CD14-positive monocyte (primary cell): ENCODE measurements at regions of chr17 and their contacts with region 1.

Region 1: GRCh38 chr17:74601944-74602572 is 10.0 kb upstream of the CD300LD start:
- DNase-seq: peak; percentile 58 to 67 (median 65)
- H3K4me3 ChIP-seq: peak overlapping the region in 2 of 3 experiments; percentile 10 to 60
- H3K4me3 Mint-ChIP-seq: peak overlapping the region; percentile 25 to 87
- H3K27ac ChIP-seq: peak overlapping the region; percentile 43 to 74
- H3K27ac Mint-ChIP-seq: peak overlapping the region; percentile 75 to 95 (median 87)
- H3K4me1 ChIP-seq: peaks cover 98 to 100% of the 10 kb centered on the region in 2 donors
- H3K4me1 Mint-ChIP-seq: peaks cover 98% of the 10 kb centered on the region
- H3K27me3 ChIP-seq: no peaks in the 10 kb centered on the region
- H3K27me3 Mint-ChIP-seq: peaks cover 0 to 15% (median 0%) of the 10 kb centered on the region in 3 donors
- CTCF ChIP-seq: peak; percentile 92

Region 2: GRCh38 chr17:74539291-74539820 is 62.7 kb before region 1 on chr17:
- intact Hi-C with region 1: loop called in 1 of 2 experiments (anchors 5 kb)
- DNase-seq: no peak
- H3K4me3 ChIP-seq: no peak overlapping the region
- H3K4me3 Mint-ChIP-seq: no peak overlapping the region
- H3K27ac ChIP-seq: no peak overlapping the region
- H3K27ac Mint-ChIP-seq: peak overlapping the region in 2 of 7 donors; percentile 10 to 51
- H3K4me1 ChIP-seq: peaks cover 11 to 18% of the 10 kb centered on the region in 2 donors
- H3K4me1 Mint-ChIP-seq: peaks cover 26% of the 10 kb centered on the region
- H3K27me3 ChIP-seq: no peaks in the 10 kb centered on the region
- H3K27me3 Mint-ChIP-seq: no peaks in the 10 kb centered on the region
- CTCF ChIP-seq: no peak

Region 3: DNA sequence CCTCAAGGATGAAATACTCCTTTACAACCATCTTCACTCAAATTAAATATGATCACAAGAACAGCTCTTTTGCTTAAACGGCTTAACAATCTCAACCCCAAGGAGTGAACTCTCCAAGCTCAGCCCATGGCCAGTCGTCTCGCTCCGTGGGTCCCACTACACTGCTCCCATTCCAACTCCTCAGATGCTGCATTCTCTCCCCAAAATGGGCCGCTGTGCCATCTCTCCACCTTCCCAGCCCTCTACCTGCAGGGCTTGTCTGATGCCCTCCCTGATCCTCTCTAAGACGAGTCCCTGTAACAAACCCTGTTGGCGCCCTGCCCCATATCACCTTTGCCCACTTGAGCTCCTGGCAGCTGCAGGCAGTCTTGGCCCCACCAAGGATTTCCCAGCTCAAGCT is 40.9 kb before region 1 on chr17:
- intact Hi-C with region 1: loop called in 1 of 2 experiments (anchors 5 kb)
- DNase-seq: no peak
- H3K4me3 ChIP-seq: no peak overlapping the region
- H3K4me3 Mint-ChIP-seq: no peak overlapping the region
- H3K27ac ChIP-seq: no peak overlapping the region
- H3K27ac Mint-ChIP-seq: peak overlapping the region in 2 of 7 donors; percentile 70 to 77
- H3K4me1 ChIP-seq: peaks cover 56 to 79% of the 10 kb centered on the region in 2 donors
- H3K4me1 Mint-ChIP-seq: peaks cover 23% of the 10 kb centered on the region
- H3K27me3 ChIP-seq: no peaks in the 10 kb centered on the region
- H3K27me3 Mint-ChIP-seq: peaks cover 3 to 8% (median 6%) of the 10 kb centered on the region in 3 donors
- CTCF ChIP-seq: no peak

Region 4: DNA sequence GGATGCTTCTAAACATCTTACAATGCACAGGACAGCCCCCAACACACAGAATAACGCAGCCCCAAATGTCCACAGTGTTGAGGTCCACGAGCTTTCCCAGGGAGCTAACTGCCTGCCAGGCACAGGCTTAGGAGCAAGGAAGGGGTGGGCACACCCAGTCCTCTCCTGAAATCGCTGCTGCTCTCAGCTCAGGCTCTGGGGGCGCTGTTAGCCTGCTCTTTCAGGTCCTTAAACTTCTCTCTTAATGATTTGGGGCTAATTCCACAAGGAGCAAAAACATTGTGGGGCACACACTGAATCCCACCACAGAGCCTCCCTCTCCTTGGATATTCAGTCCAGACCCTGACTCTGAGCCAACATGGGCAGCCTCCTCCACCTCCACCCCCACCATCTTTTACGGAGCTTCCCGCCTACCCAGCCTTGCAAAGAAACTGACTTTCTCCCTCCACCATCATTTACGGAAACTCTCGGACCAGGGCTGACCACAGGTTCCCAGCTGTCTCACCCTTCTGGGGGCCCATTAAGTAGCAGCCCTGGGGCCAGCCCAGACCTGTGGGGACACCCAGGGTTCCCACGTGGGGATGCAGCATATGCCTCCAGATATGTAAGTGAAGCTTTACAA is 35.8 kb before region 1 on chr17:
- intact Hi-C with region 1: loop called (anchors 1 to 5 kb)
- DNase-seq: peak in 2 of 3 donors; percentile 58 to 59
- H3K4me3 ChIP-seq: peak overlapping the region in 2 of 3 experiments; percentile 37 to 79
- H3K4me3 Mint-ChIP-seq: peak overlapping the region; percentile 73 to 91
- H3K27ac ChIP-seq: peak overlapping the region; percentile 26 to 82
- H3K27ac Mint-ChIP-seq: peak overlapping the region; percentile 14 to 95 (median 86)
- H3K4me1 ChIP-seq: peaks cover 75 to 87% of the 10 kb centered on the region in 2 donors
- H3K4me1 Mint-ChIP-seq: peaks cover 64% of the 10 kb centered on the region
- H3K27me3 ChIP-seq: no peaks in the 10 kb centered on the region
- H3K27me3 Mint-ChIP-seq: peaks cover 3 to 9% (median 4%) of the 10 kb centered on the region in 3 donors
- CTCF ChIP-seq: peak; percentile 82

Region 5: DNA sequence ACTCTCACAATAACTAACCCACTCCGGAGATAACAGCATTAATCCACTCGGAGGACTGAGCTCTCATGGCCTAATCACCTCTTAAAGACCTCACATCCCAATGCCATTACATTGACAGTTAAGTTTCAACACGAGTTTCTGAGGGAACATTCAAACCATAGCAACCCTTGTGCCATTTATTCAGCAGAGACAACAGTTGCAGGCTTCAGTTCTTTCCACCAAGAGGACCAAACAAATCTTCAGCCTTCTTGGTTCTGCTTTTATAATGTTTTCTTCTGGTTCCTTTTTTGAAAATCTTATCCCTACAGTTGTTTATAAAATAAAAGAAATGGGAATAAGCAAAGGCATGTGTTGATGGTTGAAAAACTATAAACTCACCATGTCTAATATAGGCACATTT is 23.6 kb after region 1 on chr17:
- intact Hi-C with region 1: no loop called
- DNase-seq: no peak
- H3K4me3 ChIP-seq: peak overlapping the region in 1 of 3 experiments; percentile 23
- H3K4me3 Mint-ChIP-seq: peak overlapping the region in 1 of 2 donors; percentile 28
- H3K27ac ChIP-seq: peak overlapping the region; percentile 32 to 70
- H3K27ac Mint-ChIP-seq: peak overlapping the region; percentile 76 to 91 (median 86)
- H3K4me1 ChIP-seq: peaks cover 71 to 85% of the 10 kb centered on the region in 2 donors
- H3K4me1 Mint-ChIP-seq: peaks cover 84% of the 10 kb centered on the region
- H3K27me3 ChIP-seq: no peaks in the 10 kb centered on the region
- H3K27me3 Mint-ChIP-seq: peaks cover 0 to 3% (median 1%) of the 10 kb centered on the region in 3 donors
- CTCF ChIP-seq: no peak

Region 6: GRCh38 chr17:74639704-74640151 is 37.7 kb after region 1 on chr17:
- intact Hi-C with region 1: loop called in 1 of 2 experiments (anchors 2 kb)
- DNase-seq: peak; percentile 89 to 94 (median 90)
- H3K4me3 ChIP-seq: peak overlapping the region in 1 of 3 experiments; percentile 19
- H3K4me3 Mint-ChIP-seq: peak overlapping the region; percentile 38 to 39
- H3K27ac ChIP-seq: peak overlapping the region; percentile 99 to 100
- H3K27ac Mint-ChIP-seq: peak overlapping the region; percentile 99 to 100 (median 100)
- H3K4me1 ChIP-seq: peaks cover 96 to 100% of the 10 kb centered on the region in 2 donors
- H3K4me1 Mint-ChIP-seq: peaks cover 93% of the 10 kb centered on the region
- H3K27me3 ChIP-seq: no peaks in the 10 kb centered on the region
- H3K27me3 Mint-ChIP-seq: peaks cover 0 to 4% (median 1%) of the 10 kb centered on the region in 3 donors
- CTCF ChIP-seq: no peak